Activated T-helper 1 cell treated with anti-CD3 and anti-CD28 coated beads, Interleukin-12 subunit alpha, Interleukin-12 subunit beta, Interleukin-2, Interleukin-4 antibody, amounts not matched to agents 30 ng/mL and 10 ng/mL and 1 ng/mL, durations not matched to agents 14 hours and 24 hours and 36 hours (primary cell): ENCODE measurements at regions of chr1 and their contacts with region 1.

Region 1: GRCh38 chr1:186985889-186986491 is 157.2 kb downstream of the PLA2G4A start:
- DNase-seq: peak; percentile 3
- H3K4me3 Mint-ChIP-seq: no peak overlapping the region
- H3K27ac Mint-ChIP-seq: no peak overlapping the region
- H3K4me1 Mint-ChIP-seq: no peaks in the 10 kb centered on the region
- H3K27me3 Mint-ChIP-seq: peaks cover 7% of the 10 kb centered on the region

Region 2: DNA sequence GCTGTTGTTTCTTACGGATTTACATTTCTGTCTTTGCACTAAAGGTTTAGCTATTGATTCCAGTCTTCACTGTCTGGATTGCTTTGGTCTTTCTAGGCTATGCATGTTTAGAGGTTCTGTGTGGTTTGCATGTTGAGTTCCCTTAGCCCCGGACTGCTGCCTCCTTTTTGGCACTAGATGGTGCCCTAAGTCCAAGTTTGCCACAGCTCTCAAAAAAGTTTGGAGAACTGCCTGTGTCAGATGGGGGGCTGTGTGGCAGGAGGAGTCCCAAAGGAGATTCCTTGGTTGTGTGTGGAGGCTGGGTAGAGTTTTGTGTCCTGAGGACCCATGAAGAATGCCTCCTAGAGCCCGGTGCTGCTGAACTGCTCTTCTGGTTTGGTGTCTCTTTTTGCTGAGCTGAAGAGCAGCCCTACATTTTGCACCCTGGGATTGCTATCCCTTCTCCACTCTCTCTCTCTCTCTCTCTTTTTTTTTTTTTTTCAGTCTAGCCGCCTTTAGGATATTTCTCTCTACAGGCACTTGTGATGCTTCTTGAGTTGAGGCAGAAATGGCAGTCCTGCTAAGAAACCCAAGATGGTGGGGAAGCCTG is 380.1 kb before region 1 on chr1:
- intact Hi-C with region 1: loop called (anchors 1 kb)
- DNase-seq: peak; percentile 11
- H3K4me3 Mint-ChIP-seq: no peak overlapping the region
- H3K27ac Mint-ChIP-seq: no peak overlapping the region
- H3K4me1 Mint-ChIP-seq: no peaks in the 10 kb centered on the region
- H3K27me3 Mint-ChIP-seq: peaks cover 51% of the 10 kb centered on the region

Region 3: GRCh38 chr1:186722711-186723309 is 263.2 kb before region 1 on chr1:
- intact Hi-C with region 1: loop called (anchors 1 kb)
- DNase-seq: no peak
- H3K4me3 Mint-ChIP-seq: no peak overlapping the region
- H3K27ac Mint-ChIP-seq: no peak overlapping the region
- H3K4me1 Mint-ChIP-seq: no peaks in the 10 kb centered on the region
- H3K27me3 Mint-ChIP-seq: peaks cover 5% of the 10 kb centered on the region

Region 4: GRCh38 chr1:186925881-186926669 is 59.9 kb before region 1 on chr1:
- intact Hi-C with region 1: loop called (anchors 10 kb)
- DNase-seq: no peak
- H3K4me3 Mint-ChIP-seq: no peak overlapping the region
- H3K27ac Mint-ChIP-seq: no peak overlapping the region
- H3K4me1 Mint-ChIP-seq: no peaks in the 10 kb centered on the region
- H3K27me3 Mint-ChIP-seq: no peaks in the 10 kb centered on the region

Region 5: GRCh38 chr1:187027253-187027652 is 41.3 kb after region 1 on chr1:
- intact Hi-C with region 1: no loop called
- DNase-seq: no peak
- H3K4me3 Mint-ChIP-seq: no peak overlapping the region
- H3K27ac Mint-ChIP-seq: no peak overlapping the region
- H3K4me1 Mint-ChIP-seq: no peaks in the 10 kb centered on the region
- H3K27me3 Mint-ChIP-seq: no peaks in the 10 kb centered on the region

Region 6: DNA sequence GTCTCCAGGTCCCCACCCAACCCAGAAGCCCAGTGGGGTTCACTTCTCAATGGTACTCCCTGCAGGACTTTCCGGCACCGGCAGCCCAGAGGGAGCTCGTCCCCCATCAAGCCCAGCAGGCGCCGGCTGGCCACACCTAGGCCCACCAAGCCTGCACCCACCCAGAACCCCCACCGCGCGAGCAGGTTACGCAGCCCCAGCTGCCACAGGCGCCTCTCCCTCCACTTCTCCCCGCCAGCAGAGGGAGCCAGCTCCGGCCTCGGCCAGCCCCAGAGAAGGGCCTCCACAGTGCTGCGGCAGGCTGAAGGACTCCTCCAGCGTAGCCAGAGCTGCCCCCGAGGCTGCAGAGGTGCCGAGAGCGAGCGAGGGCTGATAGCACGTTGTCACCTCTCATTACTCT is 565.1 kb after region 1 on chr1:
- intact Hi-C with region 1: no loop called
- DNase-seq: no peak
- H3K4me3 Mint-ChIP-seq: no peak overlapping the region
- H3K27ac Mint-ChIP-seq: no peak overlapping the region
- H3K4me1 Mint-ChIP-seq: no peaks in the 10 kb centered on the region
- H3K27me3 Mint-ChIP-seq: peaks cover 2% of the 10 kb centered on the region